PC-3 (cell line): ENCODE measurements at regions of chr3 and their contacts with region 1.

Region 1: DNA sequence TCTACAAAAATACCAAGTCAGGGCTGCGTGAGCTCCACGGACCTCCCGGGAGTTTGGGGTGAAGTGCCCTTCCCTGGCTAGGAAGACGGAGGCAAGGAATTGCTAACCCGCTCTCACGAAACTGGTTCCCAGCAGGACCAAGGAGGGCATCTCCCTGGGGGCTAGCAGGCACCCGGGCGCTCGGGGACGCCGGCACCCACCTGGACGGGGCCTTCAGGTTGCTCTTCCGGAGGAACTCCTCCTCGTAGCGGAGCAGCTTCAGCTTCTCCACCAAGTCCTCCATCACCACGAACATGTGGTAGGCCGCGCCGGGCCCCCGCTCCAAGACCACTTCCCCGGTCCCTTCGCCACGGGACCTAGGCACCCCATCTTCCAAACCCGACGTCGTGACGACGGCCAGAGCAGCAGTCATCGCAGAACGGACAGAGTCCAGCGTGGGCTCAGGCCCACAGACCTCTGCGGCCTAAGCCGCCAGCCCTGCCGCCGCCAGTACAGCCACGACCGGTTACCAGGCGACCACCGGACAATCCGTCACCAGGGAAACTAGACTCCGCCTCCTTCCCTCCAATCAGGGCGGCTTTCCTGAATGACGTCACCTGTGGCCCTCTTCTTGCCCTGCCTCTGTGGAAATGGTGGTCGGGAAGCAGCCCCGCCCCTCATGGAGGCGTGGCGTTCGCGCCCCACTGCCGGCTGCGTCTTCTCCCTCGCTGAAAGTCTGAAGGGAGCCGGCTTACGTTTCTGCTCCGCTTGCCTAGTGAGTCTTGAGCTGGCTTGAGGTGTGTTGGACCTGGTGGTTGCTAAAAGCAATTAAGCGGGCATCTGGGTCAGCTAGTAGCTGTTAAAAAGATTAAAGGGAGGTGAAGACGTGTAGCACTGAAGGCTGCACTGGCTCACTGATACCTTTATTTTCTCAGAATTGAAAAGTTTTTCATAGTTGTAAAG is at the start of gene IFT57:
- DNase-seq: peak; percentile 98
- ATAC-seq: peak; percentile 89
- H3K4me3 ChIP-seq: peak within 1 kb of the TSS; percentile 89
- H3K27ac ChIP-seq: no peak within 1 kb of the TSS; the same call in 1 of the 2 replicates
- H3K4me1 ChIP-seq: peaks cover 42% of the 10 kb centered on the region
- H3K27me3 ChIP-seq: no peaks in the 10 kb centered on the region
- CTCF ChIP-seq: no peak
- total RNA-seq, gene IFT57: 46.0 and 54.0 TPM in 2 replicates

Region 2: DNA sequence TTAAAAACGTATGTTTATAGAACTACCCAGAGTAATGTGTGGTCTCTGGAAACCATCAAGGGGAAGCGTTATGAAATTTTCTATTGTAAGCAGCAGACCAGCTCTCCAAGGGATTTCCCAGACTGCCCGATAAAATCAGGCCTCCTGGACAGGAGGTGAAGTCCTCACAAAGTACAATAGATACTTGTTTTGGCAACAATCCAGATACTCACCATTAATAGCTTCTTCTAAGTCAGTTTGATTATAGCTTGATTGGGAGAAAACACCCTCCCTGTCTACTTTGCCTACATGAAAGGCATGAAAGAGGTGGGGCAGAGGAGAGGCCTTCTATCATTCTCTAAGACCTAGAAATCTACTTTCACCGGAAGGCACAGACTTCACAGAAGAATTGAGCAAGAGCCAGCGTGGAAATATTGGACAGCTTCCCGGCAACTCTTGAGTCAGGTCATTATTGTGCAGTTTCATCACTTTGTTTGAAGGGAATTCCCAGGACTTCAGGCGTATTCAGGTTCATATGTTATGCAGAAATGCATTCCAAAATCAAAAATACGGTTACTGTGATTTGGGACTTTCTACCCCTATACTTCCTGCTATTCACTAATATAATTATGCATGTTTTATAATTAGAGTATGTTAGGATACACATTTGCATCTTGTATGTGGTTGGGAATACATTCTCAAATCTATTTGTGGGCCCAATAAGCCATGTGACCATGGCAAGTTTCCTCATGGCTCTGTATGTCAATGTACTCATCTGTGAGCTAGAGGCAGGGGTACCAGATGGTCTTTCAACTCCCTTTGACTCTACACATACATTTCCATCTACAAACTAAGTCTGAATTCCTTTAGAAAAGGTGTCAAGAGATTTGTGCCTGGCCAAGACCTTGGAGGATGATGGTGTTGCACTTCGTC is 234.9 kb before region 1 on chr3:
- CTCF ChIA-PET with region 1: no interaction called
- POLR2A ChIA-PET with region 1: no interaction called
- intact Hi-C with region 1: loop called (anchors 5 kb)
- DNase-seq: peak; percentile 98
- ATAC-seq: peak; percentile 52
- H3K4me3 ChIP-seq: no peak overlapping the region
- H3K27ac ChIP-seq: peak overlapping the region; percentile 94
- H3K4me1 ChIP-seq: peaks cover 58% of the 10 kb centered on the region
- H3K27me3 ChIP-seq: no peaks in the 10 kb centered on the region
- CTCF ChIP-seq: no peak

Region 3: DNA sequence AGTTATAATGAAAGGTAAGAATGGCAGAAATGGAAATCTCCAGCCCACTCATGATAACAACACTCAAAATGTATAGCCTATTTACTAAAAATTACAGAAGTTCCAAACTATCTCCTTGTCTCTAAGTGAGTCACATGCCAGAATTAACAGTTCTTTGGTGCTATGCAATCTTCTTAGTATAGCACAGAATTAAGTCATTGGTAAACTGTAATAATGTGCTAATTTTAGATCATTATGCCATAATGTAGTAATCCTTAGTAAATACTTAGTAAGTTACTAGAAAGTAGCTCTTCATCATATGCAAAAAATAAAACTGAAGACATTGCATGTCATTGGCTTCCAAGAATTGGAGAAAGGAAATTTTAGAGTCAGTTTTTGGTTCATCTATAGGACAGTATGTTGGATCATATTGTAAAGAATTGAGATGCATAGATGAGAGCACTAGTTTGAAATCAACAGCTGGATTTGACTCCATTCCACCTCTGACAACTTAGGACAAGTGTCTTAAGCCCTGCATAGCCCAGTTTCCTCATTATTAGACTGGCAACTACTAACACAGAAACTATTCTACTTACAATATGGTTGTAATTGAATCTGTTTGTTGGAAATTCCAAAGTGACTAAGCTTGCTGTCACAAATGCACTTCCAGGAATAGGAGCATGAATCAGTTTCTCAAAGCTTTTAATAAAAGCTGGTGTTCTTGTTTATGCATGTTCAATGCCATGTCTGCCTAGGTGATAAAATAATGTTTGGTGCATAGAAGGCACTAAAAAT is 91.3 kb before region 1 on chr3:
- CTCF ChIA-PET with region 1: interaction called, 3 read pairs
- POLR2A ChIA-PET with region 1: interaction called, 4 read pairs
- intact Hi-C with region 1: loop called (anchors 5 kb)
- DNase-seq: peak; percentile 95
- ATAC-seq: peak; percentile 86
- H3K4me3 ChIP-seq: no peak overlapping the region
- H3K27ac ChIP-seq: peak overlapping the region; percentile 90
- H3K4me1 ChIP-seq: peaks cover 38% of the 10 kb centered on the region
- H3K27me3 ChIP-seq: no peaks in the 10 kb centered on the region
- CTCF ChIP-seq: no peak

Region 4: GRCh38 chr3:108391917-108392593 is 169.9 kb after region 1 on chr3:
- CTCF ChIA-PET with region 1: no interaction called
- POLR2A ChIA-PET with region 1: no interaction called
- intact Hi-C with region 1: loop called (anchors 5 kb)
- DNase-seq: peak; percentile 84
- ATAC-seq: peak; percentile 94
- H3K4me3 ChIP-seq: no peak overlapping the region
- H3K27ac ChIP-seq: peak overlapping the region; percentile 48
- H3K4me1 ChIP-seq: peaks cover 17% of the 10 kb centered on the region
- H3K27me3 ChIP-seq: no peaks in the 10 kb centered on the region
- CTCF ChIP-seq: no peak

Region 5: DNA sequence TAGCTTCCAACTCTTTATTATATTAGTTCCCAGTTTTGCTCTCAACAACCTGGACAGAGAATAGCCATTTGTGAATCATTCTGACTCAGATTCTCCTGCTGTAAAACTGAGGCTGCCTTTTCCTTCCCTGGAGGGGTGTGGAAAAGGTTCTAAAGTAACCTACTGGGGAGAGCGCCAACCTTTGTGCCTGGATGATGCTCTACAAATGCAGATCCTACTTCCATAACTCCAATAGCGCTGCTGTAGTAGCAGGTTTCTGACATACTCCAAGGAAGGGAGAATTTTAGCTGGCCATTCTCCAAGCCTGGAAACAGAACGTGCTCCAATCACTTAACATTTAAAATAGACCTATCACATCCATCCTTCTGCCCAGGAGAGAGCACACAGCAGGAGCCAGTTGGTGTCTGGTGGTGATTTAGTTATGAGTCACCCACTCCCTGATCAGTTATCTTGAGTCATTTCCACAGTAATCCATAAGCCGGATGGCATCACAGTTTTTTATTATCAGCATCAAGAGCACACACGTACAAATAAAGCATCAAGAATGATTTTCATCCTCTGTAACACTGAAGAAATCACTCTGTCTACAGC is 249.9 kb after region 1 on chr3:
- CTCF ChIA-PET with region 1: no interaction called
- POLR2A ChIA-PET with region 1: no interaction called
- intact Hi-C with region 1: loop called (anchors 2 kb)
- DNase-seq: peak; percentile 95
- ATAC-seq: peak; percentile 87
- H3K4me3 ChIP-seq: peak overlapping the region; percentile 35; the same call in 1 of the 2 replicates
- H3K27ac ChIP-seq: peak overlapping the region; percentile 95
- H3K4me1 ChIP-seq: peaks cover 41% of the 10 kb centered on the region
- H3K27me3 ChIP-seq: no peaks in the 10 kb centered on the region
- CTCF ChIP-seq: no peak